GM12878 (cell line): ENCODE measurements at regions of chr1 and their contacts with region 1.

Region 1: GRCh38 chr1:214808845-214809460 is 206.0 kb downstream of the CENPF start:
- DNase-seq: no peak
- ATAC-seq: peak; percentile 71
- H3K4me3 ChIP-seq: no peak overlapping the region
- H3K27ac ChIP-seq: no peak overlapping the region
- H3K4me1 ChIP-seq: no peaks in the 10 kb centered on the region
- H3K27me3 ChIP-seq: no peaks in the 10 kb centered on the region
- CTCF ChIP-seq: peak in 1 of 3 experiments; percentile 32; a peak in 1 of 6 replicates
- EP300 ChIP-seq: no peak
- POLR2A ChIP-seq: no peak
- RAD21 ChIP-seq: peak; percentile 42; the same call in 1 of the 2 replicates

Region 2: GRCh38 chr1:213899413-213899812 is 909.5 kb before region 1 on chr1:
- CTCF ChIA-PET with region 1: no interaction called
- POLR2A ChIA-PET with region 1: no interaction called
- RAD21 ChIA-PET with region 1: no interaction called
- SMC1A ChIA-PET with region 1: no interaction called
- in situ Hi-C with region 1: no loop called
- intact Hi-C with region 1: no loop called
- DNase-seq: no peak
- ATAC-seq: no peak
- H3K4me3 ChIP-seq: no peak overlapping the region
- H3K27ac ChIP-seq: no peak overlapping the region
- H3K4me1 ChIP-seq: no peaks in the 10 kb centered on the region
- H3K27me3 ChIP-seq: no peaks in the 10 kb centered on the region
- CTCF ChIP-seq: no peak
- EP300 ChIP-seq: no peak
- POLR2A ChIP-seq: no peak
- RAD21 ChIP-seq: no peak

Region 3: GRCh38 chr1:215076318-215076717 is 267.4 kb after region 1 on chr1:
- CTCF ChIA-PET with region 1: interaction called, 5 read pairs
- POLR2A ChIA-PET with region 1: no interaction called
- RAD21 ChIA-PET with region 1: no interaction called
- SMC1A ChIA-PET with region 1: interaction called, 4 read pairs
- in situ Hi-C with region 1: no loop called
- intact Hi-C with region 1: loop called (anchors 5 kb)
- DNase-seq: no peak
- ATAC-seq: peak; percentile 89
- H3K4me3 ChIP-seq: no peak overlapping the region
- H3K27ac ChIP-seq: no peak overlapping the region
- H3K4me1 ChIP-seq: no peaks in the 10 kb centered on the region
- H3K27me3 ChIP-seq: peaks cover 0 to 5% of the 10 kb centered on the region in 2 experiments; a peak in 1 of 4 replicates
- CTCF ChIP-seq: peak; percentile 37 to 46 (median 46); a peak in 5 of 6 replicates
- EP300 ChIP-seq: no peak
- POLR2A ChIP-seq: no peak
- RAD21 ChIP-seq: peak; percentile 56

Region 4: DNA sequence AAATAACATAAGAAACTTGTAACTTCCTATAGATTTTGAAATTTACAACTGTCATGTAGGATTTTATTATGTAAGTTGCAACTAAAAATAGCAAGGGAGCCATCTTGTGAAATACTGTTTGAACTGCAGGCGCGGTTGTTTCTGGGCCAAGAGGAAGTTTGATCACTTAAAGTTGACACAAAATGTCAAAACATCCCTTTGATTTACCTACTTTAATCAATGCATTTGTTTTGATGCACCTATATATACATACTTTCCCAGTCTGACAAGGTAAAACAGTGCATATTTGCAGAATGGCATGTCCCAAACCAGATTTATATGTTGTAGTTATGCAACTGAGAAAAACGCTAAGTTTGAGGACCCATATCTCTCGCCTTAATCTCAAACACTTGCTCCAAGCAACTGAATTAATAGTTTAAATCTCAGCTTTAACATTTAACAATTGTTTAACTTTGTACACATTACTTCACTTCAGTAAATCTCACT is 337.4 kb after region 1 on chr1:
- CTCF ChIA-PET with region 1: no interaction called
- POLR2A ChIA-PET with region 1: no interaction called
- RAD21 ChIA-PET with region 1: no interaction called
- SMC1A ChIA-PET with region 1: no interaction called
- in situ Hi-C with region 1: no loop called
- intact Hi-C with region 1: loop called (anchors 10 kb)
- DNase-seq: no peak
- ATAC-seq: no peak
- H3K4me3 ChIP-seq: no peak overlapping the region
- H3K27ac ChIP-seq: no peak overlapping the region
- H3K4me1 ChIP-seq: no peaks in the 10 kb centered on the region
- H3K27me3 ChIP-seq: no peaks in the 10 kb centered on the region
- CTCF ChIP-seq: peak; percentile 22 to 31 (median 30); a peak in 3 of 6 replicates
- EP300 ChIP-seq: no peak
- POLR2A ChIP-seq: no peak
- RAD21 ChIP-seq: peak; percentile 51

Region 5: DNA sequence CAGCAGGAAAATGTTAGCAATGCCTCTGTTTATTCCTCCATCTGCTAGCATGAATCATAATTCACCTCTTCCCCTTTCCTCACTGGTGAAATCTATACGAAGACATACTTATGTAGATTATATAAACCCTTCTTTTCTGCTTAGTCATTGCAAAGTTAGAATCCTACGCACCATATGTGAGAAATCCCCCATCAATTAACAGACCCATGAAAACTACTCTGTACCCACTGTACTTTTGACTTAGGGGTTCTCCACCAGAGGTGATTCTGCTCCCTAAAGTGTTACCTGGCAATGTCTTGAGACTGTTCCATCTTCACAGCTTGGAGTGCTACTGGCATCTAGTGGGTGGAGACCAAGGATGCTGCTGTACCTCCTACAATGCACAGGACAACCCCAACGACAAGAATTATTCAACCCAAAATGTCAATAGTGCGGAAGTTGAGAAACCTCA is 708.5 kb after region 1 on chr1:
- CTCF ChIA-PET with region 1: no interaction called
- POLR2A ChIA-PET with region 1: no interaction called
- RAD21 ChIA-PET with region 1: no interaction called
- SMC1A ChIA-PET with region 1: no interaction called
- in situ Hi-C with region 1: loop called (anchors 25 kb)
- intact Hi-C with region 1: no loop called
- DNase-seq: no peak
- ATAC-seq: peak; percentile 50
- H3K4me3 ChIP-seq: no peak overlapping the region
- H3K27ac ChIP-seq: no peak overlapping the region
- H3K4me1 ChIP-seq: no peaks in the 10 kb centered on the region
- H3K27me3 ChIP-seq: no peaks in the 10 kb centered on the region
- CTCF ChIP-seq: no peak
- EP300 ChIP-seq: no peak
- POLR2A ChIP-seq: no peak
- RAD21 ChIP-seq: no peak